PC-9 (cell line): ENCODE measurements at regions of chr6 and their contacts with region 1.

Region 1: DNA sequence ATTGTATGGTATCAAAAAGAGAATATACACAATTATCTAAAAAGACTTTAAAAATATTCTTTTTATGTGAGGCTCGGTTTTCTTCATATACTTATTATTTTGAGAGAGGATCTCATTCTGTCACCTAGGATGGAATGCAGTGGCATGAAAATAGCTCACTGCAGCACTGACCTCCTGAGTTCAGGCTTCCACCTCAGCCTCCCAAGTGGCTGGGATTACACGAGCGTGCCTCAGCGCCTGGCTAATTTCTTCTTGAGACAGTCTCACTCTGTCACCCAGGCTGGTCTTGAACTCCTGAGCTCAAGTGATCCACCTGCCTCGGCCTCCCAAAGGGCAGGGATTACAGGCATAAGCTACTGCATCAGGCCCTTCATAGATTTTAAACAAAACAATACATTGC is 10.7 kb downstream of the DEK start:
- DNase-seq: no peak
- H3K4me3 ChIP-seq: no peak overlapping the region
- H3K27ac ChIP-seq: no peak overlapping the region
- H3K4me1 ChIP-seq: no peaks in the 10 kb centered on the region
- H3K27me3 ChIP-seq: no peaks in the 10 kb centered on the region
- CTCF ChIP-seq: no peak

Region 2: GRCh38 chr6:17877196-17877889 is 376.3 kb before region 1 on chr6:
- CTCF ChIA-PET with region 1: no interaction called
- POLR2A ChIA-PET with region 1: interaction called, 11 read pairs
- intact Hi-C with region 1: no loop called
- DNase-seq: peak; percentile 62 to 66
- H3K4me3 ChIP-seq: no peak overlapping the region
- H3K27ac ChIP-seq: peak overlapping the region; percentile 86
- H3K4me1 ChIP-seq: peaks cover 31% of the 10 kb centered on the region
- H3K27me3 ChIP-seq: no peaks in the 10 kb centered on the region
- CTCF ChIP-seq: no peak

Region 3: DNA sequence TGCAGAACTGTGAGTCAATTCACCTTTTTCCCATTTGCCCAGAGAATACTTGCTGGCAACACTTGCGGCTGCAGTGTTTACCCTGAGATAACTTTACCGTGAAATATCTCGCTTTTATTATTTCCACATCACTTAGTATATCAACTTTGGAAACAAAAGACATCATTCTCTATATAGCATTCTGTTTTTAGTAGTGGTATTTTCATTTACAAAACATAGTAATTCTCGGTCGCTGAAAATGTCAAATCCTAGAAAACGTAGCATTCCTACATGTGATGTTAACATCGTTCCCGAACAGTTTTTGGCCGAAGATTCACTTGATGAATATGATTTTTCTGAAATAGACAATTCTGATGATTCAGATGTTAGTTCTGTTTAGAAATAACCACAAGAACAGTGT is 183.1 kb before region 1 on chr6:
- CTCF ChIA-PET with region 1: interaction called, 17 read pairs
- POLR2A ChIA-PET with region 1: no interaction called
- intact Hi-C with region 1: no loop called
- DNase-seq: no peak
- H3K4me3 ChIP-seq: no peak overlapping the region
- H3K27ac ChIP-seq: no peak overlapping the region
- H3K4me1 ChIP-seq: no peaks in the 10 kb centered on the region
- H3K27me3 ChIP-seq: no peaks in the 10 kb centered on the region
- CTCF ChIP-seq: no peak

Region 4: DNA sequence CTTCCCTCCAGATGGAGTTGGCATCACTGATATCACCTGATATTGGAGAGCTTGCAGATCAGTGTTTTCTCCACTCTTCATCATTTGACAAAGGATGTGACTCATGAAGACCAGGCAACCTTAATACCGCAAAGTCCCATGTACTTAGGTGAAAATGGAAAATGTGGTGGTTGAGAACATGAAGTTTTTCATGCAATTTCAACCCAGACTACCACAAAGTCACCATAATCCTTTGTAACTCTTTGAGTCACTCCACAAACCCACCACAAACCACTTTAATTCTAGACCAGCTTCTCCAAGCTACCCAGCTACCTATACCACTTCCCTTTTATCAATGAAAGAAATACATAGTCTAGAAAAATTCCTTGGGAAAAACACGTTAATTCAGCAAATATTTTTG is 138.3 kb before region 1 on chr6:
- CTCF ChIA-PET with region 1: no interaction called
- POLR2A ChIA-PET with region 1: interaction called, 11 read pairs
- intact Hi-C with region 1: no loop called
- DNase-seq: no peak
- H3K4me3 ChIP-seq: no peak overlapping the region
- H3K27ac ChIP-seq: no peak overlapping the region
- H3K4me1 ChIP-seq: no peaks in the 10 kb centered on the region
- H3K27me3 ChIP-seq: no peaks in the 10 kb centered on the region
- CTCF ChIP-seq: no peak

Region 5: GRCh38 chr6:18323935-18324705 is 70.5 kb after region 1 on chr6:
- CTCF ChIA-PET with region 1: no interaction called
- POLR2A ChIA-PET with region 1: no interaction called
- intact Hi-C with region 1: no loop called
- DNase-seq: peak; percentile 27 to 51
- H3K4me3 ChIP-seq: no peak overlapping the region
- H3K27ac ChIP-seq: no peak overlapping the region
- H3K4me1 ChIP-seq: no peaks in the 10 kb centered on the region
- H3K27me3 ChIP-seq: no peaks in the 10 kb centered on the region
- CTCF ChIP-seq: peak; percentile 85